ENCODE measurements at regions of chr7 and their contacts with region 1.

Region 1: GRCh38 chr7:25789701-25790640 is 362.0 kb upstream of the NFE2L3 start:
- DNase-seq: no peak

Region 2: DNA sequence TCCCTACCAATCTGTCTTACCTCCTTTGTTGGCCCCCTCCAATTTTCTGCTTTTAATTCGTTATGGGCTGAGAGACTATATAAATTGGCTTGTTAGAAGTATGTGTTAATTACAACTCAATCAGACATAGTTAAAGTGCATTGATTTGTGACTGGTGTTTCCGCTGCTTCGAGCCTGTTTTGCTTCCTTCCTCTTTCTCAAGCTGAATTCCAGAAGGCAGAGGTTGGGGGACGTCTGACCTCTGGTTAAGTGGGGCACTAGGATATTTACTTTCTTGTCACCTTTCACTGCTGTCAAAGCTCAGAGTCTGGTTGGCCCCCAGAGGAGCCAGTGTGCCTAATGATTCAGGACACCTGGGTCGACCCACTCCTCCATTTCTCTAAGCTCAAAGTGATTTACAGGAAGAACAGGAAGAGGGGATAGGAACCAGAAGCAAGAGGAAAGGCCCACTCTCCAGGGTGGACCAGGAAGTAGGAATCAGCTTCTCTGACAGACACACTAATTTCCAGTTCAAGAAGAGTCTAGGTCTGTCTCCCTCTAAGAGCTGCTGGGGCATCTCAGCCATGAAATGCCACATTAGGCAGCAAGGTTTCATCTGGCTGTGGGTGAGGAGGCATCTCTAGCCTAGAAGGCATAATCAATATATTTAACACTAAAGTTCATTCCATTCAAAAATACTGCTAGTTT is 164.5 kb before region 1 on chr7:
- intact Hi-C with region 1: no loop called
- DNase-seq: no peak

Region 3: DNA sequence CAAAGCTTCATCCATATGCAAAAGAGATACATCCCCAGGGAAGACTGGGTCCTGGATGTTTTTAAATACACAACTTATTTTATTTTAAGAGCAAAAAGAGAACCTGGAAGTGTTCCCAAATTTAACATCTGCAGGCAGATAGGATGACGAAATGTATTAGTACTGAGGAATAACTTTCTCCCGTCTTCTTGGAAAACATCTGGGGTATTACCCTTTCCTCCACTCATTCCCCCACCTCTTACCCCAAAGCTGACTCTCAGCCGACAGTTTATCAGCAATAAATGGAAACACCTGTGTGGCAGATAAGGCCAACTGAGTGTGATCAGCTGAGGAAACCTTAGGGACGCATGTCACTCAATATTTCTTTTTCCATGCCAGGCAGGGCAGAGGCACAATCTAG is 126.1 kb before region 1 on chr7:
- intact Hi-C with region 1: loop called (anchors 5 kb)
- DNase-seq: no peak

Region 4: GRCh38 chr7:25844102-25844870 is 54.3 kb after region 1 on chr7:
- intact Hi-C with region 1: loop called (anchors 5 kb)
- DNase-seq: no peak

Region 5: GRCh38 chr7:25894902-25895791 is 105.2 kb after region 1 on chr7:
- intact Hi-C with region 1: no loop called
- DNase-seq: peak; percentile 81

Measured in cardiac septum (tissue), 1 donor.